Naive thymus-derived CD8-positive, alpha-beta T cell (primary cell): ENCODE measurements at regions of chr11 and their contacts with region 1.

Region 1: GRCh38 chr11:1749414-1750312 is 732 bp downstream of the IFITM10 start:
- DNase-seq: peak in 1 of 10 donors; percentile 61
- ATAC-seq: no peak
- H3K4me3 Mint-ChIP-seq: peak overlapping the region; percentile 26 to 80 (median 69)
- H3K27ac Mint-ChIP-seq: peak overlapping the region in 6 of 10 donors; percentile 20 to 72 (median 58)
- H3K4me1 Mint-ChIP-seq: peaks cover 17 to 54% (median 39%) of the 10 kb centered on the region in 4 donors
- H3K27me3 Mint-ChIP-seq: peaks cover 7 to 18% (median 13%) of the 10 kb centered on the region in 5 donors

Region 2: GRCh38 chr11:1586699-1587098 is 163.0 kb before region 1 on chr11:
- POLR2A ChIA-PET with region 1: no interaction called
- DNase-seq: no peak
- ATAC-seq: no peak
- H3K4me3 Mint-ChIP-seq: peak overlapping the region in 1 of 10 donors; percentile 48
- H3K27ac Mint-ChIP-seq: no peak overlapping the region
- H3K4me1 Mint-ChIP-seq: peaks cover 15 to 38% (median 33%) of the 10 kb centered on the region in 4 donors
- H3K27me3 Mint-ChIP-seq: peaks cover 7 to 39% (median 15%) of the 10 kb centered on the region in 5 donors

Region 3: DNA sequence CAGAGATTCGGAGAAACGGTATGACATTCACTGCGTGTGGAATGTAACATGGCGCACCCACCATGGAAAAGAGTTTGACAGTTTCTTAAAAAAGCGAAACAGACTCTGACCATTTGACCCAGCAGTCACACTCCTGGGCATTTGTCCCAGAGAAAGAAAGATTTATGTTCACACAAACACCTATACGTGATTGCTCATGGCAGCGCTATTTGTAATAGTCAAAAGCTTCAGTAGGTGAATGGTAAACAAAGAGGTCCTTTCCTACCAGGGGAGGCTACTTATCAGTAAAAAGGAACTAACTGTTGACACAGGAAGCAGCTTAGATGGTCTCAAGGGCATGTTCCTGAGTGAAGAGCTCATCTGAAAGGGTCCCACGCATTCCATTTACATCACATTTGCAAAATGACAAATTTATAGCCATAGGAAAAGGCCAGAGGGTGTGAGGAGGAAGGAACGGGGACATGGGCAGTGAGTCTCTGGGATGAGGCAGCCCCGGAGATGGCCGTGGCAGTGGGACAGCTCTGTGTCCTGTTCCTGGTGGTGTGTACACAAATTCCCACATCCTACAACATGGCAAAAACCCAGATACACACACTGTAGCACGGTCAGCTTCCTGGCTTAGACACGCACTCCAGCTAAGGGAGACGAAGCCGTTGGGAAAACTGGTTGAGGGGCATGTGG is 67.3 kb before region 1 on chr11:
- POLR2A ChIA-PET with region 1: no interaction called
- DNase-seq: no peak
- ATAC-seq: no peak
- H3K4me3 Mint-ChIP-seq: no peak overlapping the region
- H3K27ac Mint-ChIP-seq: peak overlapping the region in 1 of 10 donors; percentile 44
- H3K4me1 Mint-ChIP-seq: peaks cover 0 to 2% (median 0%) of the 10 kb centered on the region in 4 donors
- H3K27me3 Mint-ChIP-seq: peaks cover 4 to 18% (median 12%) of the 10 kb centered on the region in 5 donors

Region 4: DNA sequence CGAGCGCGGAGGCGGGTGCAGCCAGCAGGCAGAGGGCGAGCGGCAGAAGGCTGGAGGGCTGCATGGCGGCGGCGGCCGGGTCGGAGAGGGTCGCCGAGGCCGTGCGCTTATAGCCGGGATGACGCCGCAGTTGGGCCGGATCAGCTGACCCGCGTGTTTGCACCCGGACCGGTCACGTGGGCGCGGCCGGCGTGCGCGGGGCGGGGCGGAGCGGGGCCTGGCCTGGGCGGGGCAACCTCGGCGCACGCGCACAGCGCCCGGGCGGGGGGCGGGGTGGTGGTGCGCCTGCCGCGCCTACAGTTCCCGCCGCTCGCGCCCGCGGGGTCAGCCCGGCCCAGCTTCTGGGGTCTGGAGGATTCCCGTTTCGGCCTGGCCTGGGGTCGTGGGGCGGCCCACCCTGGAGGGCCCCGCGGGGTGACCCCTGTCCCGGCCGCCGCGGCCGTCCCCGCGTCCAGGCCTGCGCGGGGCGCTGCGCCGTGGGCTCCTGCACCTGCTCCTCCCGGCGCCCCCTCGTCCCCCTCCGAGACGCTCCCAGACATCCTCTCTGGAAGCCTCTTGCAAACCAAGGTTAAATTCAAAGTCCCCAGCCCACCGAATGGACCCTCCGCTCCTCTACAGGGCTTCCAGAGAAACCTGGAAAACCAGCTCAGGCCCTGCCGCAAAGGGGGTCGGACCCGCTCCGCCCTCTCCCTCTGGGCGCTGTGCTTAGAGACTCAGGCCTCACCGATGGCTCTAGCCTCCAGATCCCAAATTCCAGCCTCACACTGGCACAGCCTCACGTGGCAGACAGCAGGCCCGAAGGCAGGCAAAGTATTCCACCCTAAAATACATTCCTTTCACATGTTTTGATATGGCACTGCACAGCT is 14.4 kb after region 1 on chr11 and contains the start of gene CTSD:
- POLR2A ChIA-PET with region 1: interaction called, 31 read pairs
- DNase-seq: peak; percentile 68 to 93 (median 87)
- ATAC-seq: peak; percentile 80 to 87
- H3K4me3 Mint-ChIP-seq: peak within 1 kb of the TSS; percentile 86 to 94 (median 91)
- H3K27ac Mint-ChIP-seq: peak within 1 kb of the TSS; percentile 85 to 95 (median 90)
- H3K4me1 Mint-ChIP-seq: peaks cover 17 to 41% (median 36%) of the 10 kb centered on the region in 4 donors
- H3K27me3 Mint-ChIP-seq: no peaks in the 10 kb centered on the region
- polyA plus RNA-seq, gene CTSD: 163 to 203 (median 176) TPM

Region 5: DNA sequence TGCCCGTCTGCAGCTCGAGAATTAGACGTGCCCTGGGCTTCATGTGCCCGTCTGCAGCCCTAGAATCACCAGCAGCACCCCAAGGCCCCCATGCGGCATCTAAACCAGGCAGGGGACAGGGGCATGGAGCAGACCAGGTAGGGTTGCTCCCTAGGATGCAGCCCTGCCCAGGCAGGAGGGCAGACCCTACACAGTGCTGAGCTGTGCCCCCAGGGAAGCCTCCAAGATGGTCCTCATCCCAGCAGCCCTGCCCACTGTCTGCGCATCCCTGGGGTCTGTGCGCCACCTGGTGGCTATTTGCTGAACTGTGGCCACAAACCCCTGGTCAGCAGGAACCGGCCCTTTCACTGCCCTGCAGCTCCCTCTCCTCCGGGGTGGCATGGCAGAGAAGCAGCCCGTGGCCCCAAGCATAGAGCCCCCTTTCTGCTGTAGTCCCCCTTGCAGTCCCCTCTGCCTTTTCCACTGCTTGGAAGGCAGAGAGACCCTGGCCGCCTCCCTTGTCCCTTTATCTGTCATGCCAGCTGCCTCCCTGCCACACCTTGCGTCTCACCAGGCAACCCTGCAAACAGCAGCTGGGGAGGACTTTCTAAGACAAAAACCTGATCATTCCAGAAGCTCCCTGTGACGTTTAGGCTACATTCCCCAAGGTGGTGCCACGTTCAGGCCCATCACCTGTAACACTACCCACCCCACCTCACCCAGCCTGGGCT is 781.8 kb after region 1 on chr11:
- POLR2A ChIA-PET with region 1: no interaction called
- DNase-seq: peak; percentile 25 to 81 (median 67)
- ATAC-seq: peak; percentile 26 to 29
- H3K4me3 Mint-ChIP-seq: peak overlapping the region in 1 of 10 donors; percentile 8
- H3K27ac Mint-ChIP-seq: peak overlapping the region in 5 of 10 donors; percentile 25 to 86 (median 41)
- H3K4me1 Mint-ChIP-seq: peaks cover 17 to 49% (median 35%) of the 10 kb centered on the region in 4 donors
- H3K27me3 Mint-ChIP-seq: no peaks in the 10 kb centered on the region